ENCODE measurements at regions of chr10 and their contacts with region 1.

Region 1: DNA sequence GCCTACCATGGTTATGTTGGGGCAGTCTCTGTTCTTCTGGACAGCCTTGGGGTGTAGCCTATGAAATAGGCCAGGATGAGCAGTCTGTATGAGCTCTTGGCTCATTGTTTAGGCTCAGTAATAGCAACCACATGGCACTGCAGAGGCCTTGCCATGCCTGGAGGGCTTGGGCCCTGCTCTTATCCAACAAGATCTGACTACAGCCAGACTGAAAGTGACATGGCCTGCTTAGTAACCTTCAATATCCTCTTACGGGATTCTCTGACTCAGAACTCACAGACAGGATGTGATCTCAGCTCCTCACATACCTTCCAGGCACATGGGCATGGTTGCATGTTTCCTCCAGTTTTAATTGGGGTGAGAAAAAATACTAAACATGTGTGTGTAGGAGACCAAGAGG is 289.3 kb downstream of the PTEN start:
- DNase-seq: no peak
- ATAC-seq: peak in 5 of 8 donors; percentile 65 to 90 (median 70)
- H3K4me3 ChIP-seq: no peak overlapping the region
- H3K27ac ChIP-seq: peak overlapping the region in 3 of 10 donors; percentile 46 to 83 (median 54)
- H3K4me1 ChIP-seq: peaks cover 0 to 24% (median 5%) of the 10 kb centered on the region in 9 donors
- H3K27me3 ChIP-seq: no peaks in the 10 kb centered on the region
- CTCF ChIP-seq: no peak

Region 2: DNA sequence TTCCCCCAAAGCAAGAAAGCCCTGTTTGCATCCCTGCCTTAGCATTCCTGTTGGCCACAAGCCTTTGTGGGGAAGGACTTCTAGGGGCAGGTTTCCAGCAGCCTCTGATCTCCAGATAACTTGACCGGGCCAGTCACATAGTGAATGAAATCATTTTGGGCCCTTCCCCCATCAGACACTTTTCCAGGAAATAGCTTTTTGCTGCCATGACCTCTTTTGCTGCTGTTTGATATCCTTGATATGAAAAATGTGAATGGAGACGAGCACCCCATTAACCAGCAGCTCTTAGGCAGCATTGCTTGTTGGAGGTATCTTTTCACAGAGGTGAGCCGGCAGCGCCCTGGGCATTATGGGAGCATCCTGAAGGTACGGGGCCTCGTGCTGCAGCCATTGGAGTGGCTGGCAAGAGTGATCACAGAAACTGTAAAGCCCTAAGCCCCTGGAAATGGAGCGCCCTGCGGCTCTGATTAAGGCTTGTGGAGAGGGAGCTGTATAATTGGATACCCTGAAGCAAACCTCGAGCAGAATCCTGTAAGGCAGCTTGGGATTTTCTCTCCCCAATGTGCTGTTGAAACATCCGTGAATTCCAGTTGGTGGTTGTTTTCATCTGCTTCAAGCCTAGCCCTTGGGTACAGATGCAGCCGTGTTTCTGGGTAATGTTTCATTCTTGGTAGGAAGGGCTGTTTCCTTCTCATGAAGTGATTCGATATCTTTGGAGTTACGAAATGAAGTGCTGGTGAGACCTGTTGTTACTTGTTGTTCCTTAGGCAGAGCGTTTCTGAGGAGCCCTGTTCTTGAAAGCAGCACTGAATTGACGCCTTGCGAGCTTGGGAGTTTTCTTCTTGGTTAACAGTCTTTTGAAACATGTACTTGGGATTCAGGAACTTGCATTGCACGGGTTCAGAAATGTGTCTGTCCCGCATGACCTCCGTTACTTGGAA is 110.3 kb before region 1 on chr10:
- intact Hi-C with region 1: loop called in 2 of 10 experiments (anchors 5 kb)
- DNase-seq: peak in 1 of 2 donors; percentile 17
- ATAC-seq: peak in 5 of 8 donors; percentile 38 to 71 (median 65)
- H3K4me3 ChIP-seq: no peak overlapping the region
- H3K27ac ChIP-seq: peak overlapping the region in 6 of 10 donors; percentile 26 to 65 (median 44)
- H3K4me1 ChIP-seq: peaks cover 3 to 71% (median 18%) of the 10 kb centered on the region in 9 donors
- H3K27me3 ChIP-seq: no peaks in the 10 kb centered on the region
- CTCF ChIP-seq: no peak

Region 3: GRCh38 chr10:88232029-88232895 is 79.5 kb after region 1 on chr10:
- intact Hi-C with region 1: loop called in 1 of 10 experiments (anchors 5 kb)
- DNase-seq: peak; percentile 84
- ATAC-seq: peak; percentile 58 to 72 (median 65)
- H3K4me3 ChIP-seq: no peak overlapping the region
- H3K27ac ChIP-seq: peak overlapping the region; percentile 7 to 77 (median 68)
- H3K4me1 ChIP-seq: peaks cover 6 to 78% (median 42%) of the 10 kb centered on the region in 9 donors
- H3K27me3 ChIP-seq: no peaks in the 10 kb centered on the region
- CTCF ChIP-seq: no peak

Region 4: GRCh38 chr10:88243836-88244730 is 91.4 kb after region 1 on chr10:
- intact Hi-C with region 1: loop called in 2 of 10 experiments (anchors 10 kb)
- DNase-seq: peak; percentile 76 to 87
- ATAC-seq: peak; percentile 85 to 98 (median 90)
- H3K4me3 ChIP-seq: peak overlapping the region in 7 of 10 donors; percentile 1 to 38 (median 26)
- H3K27ac ChIP-seq: peak overlapping the region; percentile 65 to 90 (median 81)
- H3K4me1 ChIP-seq: peaks cover 8 to 58% (median 42%) of the 10 kb centered on the region in 9 donors
- H3K27me3 ChIP-seq: no peaks in the 10 kb centered on the region
- CTCF ChIP-seq: no peak

Region 5: DNA sequence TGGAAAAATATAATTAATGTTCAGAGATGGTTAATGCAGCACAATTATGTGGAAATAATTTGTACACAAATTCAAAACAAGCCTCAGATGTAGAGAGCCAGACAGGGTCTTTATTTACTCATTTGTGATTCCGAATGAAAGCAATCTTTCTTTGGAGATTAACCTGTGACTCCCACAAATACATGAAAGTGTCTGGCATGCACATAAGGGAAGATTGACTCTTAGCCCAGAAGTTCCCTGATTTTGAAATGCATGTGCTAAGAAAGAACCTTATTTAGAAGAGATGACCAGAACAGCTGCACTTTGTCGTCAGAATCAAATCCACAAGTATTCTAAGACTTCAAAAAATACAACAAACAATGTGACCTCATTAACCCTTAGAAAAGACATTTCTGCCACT is 385.3 kb after region 1 on chr10:
- intact Hi-C with region 1: loop called in 1 of 10 experiments (anchors 10 kb)
- DNase-seq: no peak
- ATAC-seq: peak in 3 of 8 donors; percentile 36 to 62 (median 57)
- H3K4me3 ChIP-seq: no peak overlapping the region
- H3K27ac ChIP-seq: peak overlapping the region in 7 of 10 donors; percentile 0 to 51 (median 8)
- H3K4me1 ChIP-seq: peaks cover 0 to 13% (median 5%) of the 10 kb centered on the region in 9 donors
- H3K27me3 ChIP-seq: no peaks in the 10 kb centered on the region
- CTCF ChIP-seq: no peak

Region 6: GRCh38 chr10:88557659-88558058 is 404.9 kb after region 1 on chr10:
- intact Hi-C with region 1: no loop called
- DNase-seq: no peak
- ATAC-seq: no peak
- H3K4me3 ChIP-seq: no peak overlapping the region
- H3K27ac ChIP-seq: no peak overlapping the region
- H3K4me1 ChIP-seq: no peaks in the 10 kb centered on the region
- H3K27me3 ChIP-seq: no peaks in the 10 kb centered on the region
- CTCF ChIP-seq: no peak